Activated CD8-positive, alpha-beta T cell treated with anti-CD3 and anti-CD28 coated beads for 36 hours (primary cell): ENCODE measurements at regions of chr19 and their contacts with region 1.

Region 1: DNA sequence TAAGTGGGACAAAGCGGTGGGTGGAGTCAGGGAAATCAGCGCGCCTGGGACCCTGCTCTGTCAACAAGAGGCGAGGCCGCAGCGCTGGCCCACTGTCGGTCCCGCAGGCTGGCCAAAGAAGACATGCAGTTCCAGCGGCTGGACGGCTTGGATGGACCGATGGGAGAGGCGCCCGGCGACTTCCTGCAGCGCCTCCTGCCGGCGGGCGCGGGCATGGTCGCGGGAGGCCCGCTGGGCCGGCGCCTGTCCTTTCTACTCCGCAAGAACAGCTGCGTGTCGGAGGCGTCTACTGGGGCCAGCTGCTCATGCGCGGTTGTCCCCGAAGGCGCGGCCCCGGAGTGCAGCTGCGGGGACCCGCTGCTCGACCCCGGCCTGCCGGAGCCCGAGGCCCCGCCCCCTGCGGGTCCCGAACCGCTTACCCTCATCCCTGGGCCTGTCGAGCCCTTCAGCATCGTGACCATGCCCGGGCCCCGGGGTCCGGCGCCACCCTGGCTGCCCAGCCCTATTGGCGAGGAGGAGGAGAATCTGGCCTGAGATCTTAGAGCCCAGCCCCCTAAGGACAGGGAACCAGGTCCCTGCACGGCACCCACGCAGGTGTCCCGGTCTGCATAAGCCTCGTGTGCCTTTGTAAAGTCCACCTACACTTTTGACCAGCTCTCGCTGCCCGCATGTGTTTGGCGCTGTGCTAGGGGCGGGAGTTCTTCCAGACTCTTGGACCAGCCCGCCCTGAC is 6.1 kb downstream of the BEST2 start:
- DNase-seq: peak; percentile 77
- ATAC-seq: peak; percentile 83
- H3K4me3 Mint-ChIP-seq: peak overlapping the region; percentile 41
- H3K27ac Mint-ChIP-seq: no peak overlapping the region
- H3K4me1 Mint-ChIP-seq: peaks cover 10% of the 10 kb centered on the region
- H3K27me3 Mint-ChIP-seq: peaks cover 18% of the 10 kb centered on the region
- CTCF ChIP-seq: peak; percentile 98

Region 2: DNA sequence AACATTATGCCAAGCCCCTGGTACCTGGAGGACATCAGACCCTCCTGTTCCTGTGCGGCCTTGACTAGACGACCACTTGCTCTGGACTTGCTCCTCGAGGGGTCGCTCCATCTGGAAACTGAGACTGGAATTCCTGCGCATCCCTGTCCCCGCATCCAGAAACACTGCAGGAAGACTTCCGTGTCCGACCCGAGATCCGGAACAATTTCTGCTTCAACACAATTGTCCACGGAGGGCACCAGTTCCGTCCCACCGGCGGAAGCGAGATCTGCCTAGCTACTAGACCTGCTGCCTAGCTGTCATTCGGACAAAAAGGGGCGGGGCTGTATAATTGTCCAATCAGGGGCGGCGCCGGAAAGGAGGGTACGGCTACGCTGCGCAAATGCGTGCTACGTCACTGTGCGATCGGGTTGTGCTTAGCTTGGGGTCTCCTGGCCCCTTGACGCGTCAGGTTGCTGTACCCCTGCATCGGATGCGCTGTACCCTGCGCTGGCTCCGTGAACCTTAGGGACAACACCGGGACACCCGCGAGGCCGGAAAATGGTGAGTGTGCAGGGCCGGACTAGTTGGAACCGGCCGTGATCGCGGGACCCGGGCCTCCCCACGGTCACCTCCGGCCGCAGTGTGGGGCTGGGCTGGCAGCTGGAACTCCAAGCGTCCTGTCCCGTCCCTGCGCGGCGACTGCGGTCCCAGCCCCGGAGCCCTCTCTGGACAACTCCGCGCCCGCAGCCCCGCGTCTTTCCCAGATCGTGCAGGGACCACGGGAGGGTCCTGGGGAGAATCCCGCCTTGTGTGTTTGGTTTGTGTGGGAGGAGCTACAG is 147.0 kb before region 1 on chr19 and contains the starts of genes ZNF490 and ZNF791:
- CTCF ChIA-PET with region 1: no interaction called
- POLR2A ChIA-PET with region 1: no interaction called
- intact Hi-C with region 1: no loop called
- DNase-seq: peak; percentile 99
- ATAC-seq: peak; percentile 94
- H3K4me3 Mint-ChIP-seq: peak within 1 kb of the TSS; percentile 94
- H3K27ac Mint-ChIP-seq: peak within 1 kb of the TSS; percentile 99
- H3K4me1 Mint-ChIP-seq: peaks cover 29% of the 10 kb centered on the region
- H3K27me3 Mint-ChIP-seq: no peaks in the 10 kb centered on the region
- CTCF ChIP-seq: no peak
- total RNA-seq, gene ZNF490: 6.8 to 9.3 TPM
- total RNA-seq, gene ZNF791: 15.1 to 16.7 TPM

Region 3: GRCh38 chr19:12716861-12717260 is 40.8 kb before region 1 on chr19:
- CTCF ChIA-PET with region 1: interaction called, 24 read pairs
- POLR2A ChIA-PET with region 1: no interaction called
- intact Hi-C with region 1: no loop called
- DNase-seq: peak; percentile 49
- ATAC-seq: peak; percentile 67
- H3K4me3 Mint-ChIP-seq: no peak overlapping the region
- H3K27ac Mint-ChIP-seq: peak overlapping the region; percentile 20
- H3K4me1 Mint-ChIP-seq: peaks cover 23% of the 10 kb centered on the region
- H3K27me3 Mint-ChIP-seq: no peaks in the 10 kb centered on the region
- CTCF ChIP-seq: peak; percentile 28

Region 4: DNA sequence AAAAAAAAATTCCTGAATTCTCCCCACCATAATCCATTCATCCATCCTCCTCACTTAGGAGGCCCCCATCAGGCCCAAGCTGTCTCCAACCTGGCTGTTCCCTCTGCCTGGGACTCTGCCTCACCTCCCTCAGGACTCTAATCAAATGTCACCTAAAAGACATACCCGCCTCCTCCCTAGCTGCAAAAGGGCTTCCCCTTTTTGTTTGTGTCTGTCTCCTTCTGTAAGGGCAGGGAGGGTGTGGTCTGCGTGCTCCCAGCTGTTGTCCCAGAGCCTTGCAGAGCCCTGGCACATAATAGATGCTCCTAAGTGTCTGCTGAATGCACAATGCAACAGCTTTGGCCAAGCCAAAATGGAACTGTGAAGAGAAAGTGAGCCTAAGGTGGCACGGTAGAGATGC is 27.7 kb before region 1 on chr19:
- CTCF ChIA-PET with region 1: interaction called, 47 read pairs
- POLR2A ChIA-PET with region 1: interaction called, 3 read pairs
- intact Hi-C with region 1: no loop called
- DNase-seq: no peak
- ATAC-seq: no peak
- H3K4me3 Mint-ChIP-seq: no peak overlapping the region
- H3K27ac Mint-ChIP-seq: no peak overlapping the region
- H3K4me1 Mint-ChIP-seq: peaks cover 25% of the 10 kb centered on the region
- H3K27me3 Mint-ChIP-seq: no peaks in the 10 kb centered on the region
- CTCF ChIP-seq: no peak

Region 5: GRCh38 chr19:12777217-12778016 is 19.7 kb after region 1 on chr19:
- CTCF ChIA-PET with region 1: interaction called, 62 read pairs
- POLR2A ChIA-PET with region 1: interaction called, 9 read pairs
- intact Hi-C with region 1: no loop called
- DNase-seq: peak; percentile 85
- ATAC-seq: peak; percentile 32
- H3K4me3 Mint-ChIP-seq: peak overlapping the region; percentile 85
- H3K27ac Mint-ChIP-seq: peak overlapping the region; percentile 92
- H3K4me1 Mint-ChIP-seq: peaks cover 45% of the 10 kb centered on the region
- H3K27me3 Mint-ChIP-seq: no peaks in the 10 kb centered on the region
- CTCF ChIP-seq: peak; percentile 99

Region 6: DNA sequence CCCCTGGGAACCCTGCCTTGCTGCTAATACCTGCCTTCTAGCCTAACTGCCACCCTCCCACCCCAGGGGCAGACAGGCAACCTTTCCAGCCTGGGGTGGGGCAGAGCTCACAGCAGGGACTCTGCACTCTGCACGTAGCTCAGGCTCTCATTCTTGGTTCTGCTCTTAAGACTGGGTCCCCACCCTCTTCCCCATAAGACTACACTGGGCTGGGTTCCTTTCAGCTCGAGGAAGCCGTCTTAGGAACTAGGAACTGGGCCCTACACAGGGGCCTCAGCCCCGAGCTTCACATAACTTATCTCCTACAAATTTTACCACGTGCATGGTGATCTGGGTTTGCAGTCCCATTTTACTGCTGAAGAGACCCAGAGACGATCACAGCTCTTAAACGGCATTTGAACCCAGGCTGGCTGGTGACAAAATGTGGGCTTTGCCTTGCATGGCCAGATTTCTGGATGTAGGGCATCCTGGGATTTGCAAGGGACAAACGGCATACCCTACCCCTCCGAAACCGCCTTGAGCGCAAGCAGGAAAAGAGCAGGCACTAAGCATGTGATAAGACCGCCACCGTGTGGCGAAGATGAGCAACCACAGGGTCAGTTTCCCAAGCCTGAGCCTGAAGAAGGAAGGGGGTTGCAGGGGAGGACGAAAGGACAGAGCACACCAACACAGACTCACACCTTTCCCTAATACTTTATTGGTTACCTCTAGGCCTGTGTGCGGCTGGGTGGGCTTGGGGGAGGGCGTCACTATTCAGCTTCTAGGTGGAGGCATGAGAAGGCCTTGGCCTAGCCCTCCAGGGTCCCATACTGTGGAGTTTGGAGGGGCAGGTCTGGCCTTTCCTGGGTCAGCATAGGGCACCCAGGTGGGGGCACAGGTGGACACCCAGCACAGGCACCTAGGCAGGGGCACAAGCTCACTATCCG is 38.7 kb after region 1 on chr19:
- CTCF ChIA-PET with region 1: interaction called, 480 read pairs
- POLR2A ChIA-PET with region 1: interaction called, 7 read pairs
- intact Hi-C with region 1: loop called (anchors 2 kb)
- DNase-seq: peak; percentile 80
- ATAC-seq: peak; percentile 15
- H3K4me3 Mint-ChIP-seq: peak overlapping the region; percentile 68
- H3K27ac Mint-ChIP-seq: peak overlapping the region; percentile 87
- H3K4me1 Mint-ChIP-seq: peaks cover 34% of the 10 kb centered on the region
- H3K27me3 Mint-ChIP-seq: no peaks in the 10 kb centered on the region
- CTCF ChIP-seq: peak; percentile 93